ENCODE measurements at regions of chr12 and their contacts with region 1.

Region 1: GRCh38 chr12:32455607-32456071 is 56.3 kb downstream of the FGD4 start:
- DNase-seq: peak in 1 of 2 experiments; percentile 69
- H3K4me3 ChIP-seq: no peak overlapping the region
- H3K4me3 Mint-ChIP-seq: no peak overlapping the region
- H3K27ac Mint-ChIP-seq: peak overlapping the region; percentile 74
- H3K4me1 ChIP-seq: peaks cover 48% of the 10 kb centered on the region
- H3K4me1 Mint-ChIP-seq: peaks cover 54% of the 10 kb centered on the region
- H3K27me3 ChIP-seq: no peaks in the 10 kb centered on the region
- H3K27me3 Mint-ChIP-seq: no peaks in the 10 kb centered on the region
- CTCF ChIP-seq: peak; percentile 68 to 82

Region 2: DNA sequence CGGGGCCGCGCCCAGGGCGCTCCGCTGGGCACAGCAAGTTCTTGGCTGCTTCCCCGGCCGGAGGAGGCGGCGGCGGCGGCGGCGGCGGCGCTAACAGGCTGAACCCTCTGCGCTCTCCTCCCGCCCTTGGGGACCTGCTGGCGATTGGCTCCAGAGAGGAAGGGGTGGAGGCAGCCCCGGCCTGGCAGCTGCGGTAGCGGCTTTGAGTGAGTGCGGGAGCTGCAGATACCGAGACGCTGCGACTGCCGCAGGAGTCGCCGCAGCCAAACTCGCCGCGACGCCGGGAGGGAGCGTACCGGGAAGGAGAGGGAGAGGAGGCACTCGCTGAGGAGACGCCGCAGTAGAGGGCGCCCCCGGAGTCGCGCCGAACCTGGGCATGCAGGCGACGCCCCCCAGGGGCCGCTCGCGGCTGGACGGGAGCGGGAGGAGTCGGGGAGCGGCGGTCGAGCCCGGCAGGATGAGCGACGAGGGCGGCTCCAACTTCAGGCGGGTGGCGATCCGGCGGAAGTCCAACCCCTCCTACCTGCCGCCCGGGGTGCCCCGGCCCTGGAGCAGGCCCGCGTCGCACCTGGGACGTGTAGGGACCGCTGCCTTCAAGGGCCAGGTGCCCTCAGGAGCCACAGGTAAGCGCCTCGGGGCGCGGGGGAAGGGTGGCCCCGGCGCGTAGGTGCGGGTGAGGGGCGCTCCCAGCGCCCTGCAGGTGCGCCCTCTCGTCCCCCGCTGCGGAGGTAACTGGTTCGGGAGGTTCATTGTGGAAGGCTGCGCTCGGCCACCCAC is 56.1 kb before region 1 on chr12 and contains the start of gene FGD4:
- CTCF ChIA-PET with region 1: interaction called, 3 read pairs
- POLR2A ChIA-PET with region 1: no interaction called
- intact Hi-C with region 1: loop called (anchors 2 kb)
- DNase-seq: peak; percentile 96 to 97
- H3K4me3 ChIP-seq: peak within 1 kb of the TSS; percentile 93
- H3K4me3 Mint-ChIP-seq: peak within 1 kb of the TSS; percentile 86
- H3K27ac Mint-ChIP-seq: peak within 1 kb of the TSS; percentile 87
- H3K4me1 ChIP-seq: peaks cover 13% of the 10 kb centered on the region
- H3K4me1 Mint-ChIP-seq: peaks cover 14% of the 10 kb centered on the region
- H3K27me3 ChIP-seq: no peaks in the 10 kb centered on the region
- H3K27me3 Mint-ChIP-seq: no peaks in the 10 kb centered on the region
- CTCF ChIP-seq: peak; percentile 68 to 86
- total RNA-seq, gene FGD4: 31.6 and 34.3 TPM in 2 replicates

Region 3: DNA sequence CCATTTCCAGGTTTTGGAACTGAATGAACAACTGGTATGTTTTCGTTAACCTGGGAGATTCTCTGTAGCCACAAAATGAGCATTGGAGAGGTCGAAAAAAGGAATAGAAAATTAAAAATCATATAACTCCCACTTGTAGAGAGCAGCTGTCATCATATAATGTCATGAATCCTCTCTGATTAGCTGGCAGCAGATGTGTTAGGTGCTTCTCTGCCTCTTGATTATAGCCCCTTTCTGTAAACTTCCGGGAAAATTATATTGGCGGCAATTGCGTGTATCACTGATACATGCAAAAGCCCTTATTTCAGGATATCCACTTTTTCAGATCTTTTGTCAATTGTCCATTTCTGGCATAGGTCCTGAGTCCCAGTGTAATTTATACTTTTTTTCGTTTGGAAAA is 24.6 kb before region 1 on chr12:
- CTCF ChIA-PET with region 1: no interaction called
- POLR2A ChIA-PET with region 1: no interaction called
- intact Hi-C with region 1: no loop called
- DNase-seq: no peak
- H3K4me3 ChIP-seq: no peak overlapping the region
- H3K4me3 Mint-ChIP-seq: no peak overlapping the region
- H3K27ac Mint-ChIP-seq: no peak overlapping the region
- H3K4me1 ChIP-seq: peaks cover 6% of the 10 kb centered on the region
- H3K4me1 Mint-ChIP-seq: peaks cover 8% of the 10 kb centered on the region
- H3K27me3 ChIP-seq: no peaks in the 10 kb centered on the region
- H3K27me3 Mint-ChIP-seq: no peaks in the 10 kb centered on the region
- CTCF ChIP-seq: no peak

Region 4: DNA sequence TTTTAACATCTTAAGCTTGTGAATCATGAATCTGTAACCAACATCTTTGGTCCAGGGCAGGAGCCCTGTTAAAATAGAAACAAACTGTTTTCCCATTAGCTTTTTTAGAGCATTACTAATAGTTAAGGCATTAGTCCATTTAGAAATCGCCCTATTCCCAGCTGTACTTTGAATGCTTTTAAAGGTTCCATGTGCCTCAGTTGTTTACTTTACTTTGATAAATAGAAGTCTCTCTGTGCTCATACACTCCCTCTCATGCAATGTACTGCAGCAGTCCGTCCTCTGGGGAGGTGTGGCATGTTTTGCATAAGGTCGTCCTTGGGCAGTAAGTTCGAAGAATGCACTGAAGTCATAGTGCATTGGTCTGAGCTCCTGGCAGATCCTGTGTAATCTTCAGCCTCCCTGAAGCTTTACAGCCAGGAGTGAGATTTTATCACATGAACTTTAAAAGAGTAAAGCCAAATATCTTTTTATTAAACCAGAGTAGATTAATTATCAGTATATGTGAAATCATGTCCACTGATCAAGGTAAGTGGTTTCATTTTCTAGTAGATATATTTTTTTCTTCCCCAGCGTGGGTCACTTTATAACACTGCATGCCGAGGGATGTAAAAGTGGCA is 78.4 kb after region 1 on chr12:
- CTCF ChIA-PET with region 1: no interaction called
- POLR2A ChIA-PET with region 1: no interaction called
- intact Hi-C with region 1: loop called (anchors 2 kb)
- DNase-seq: peak; percentile 85 to 88
- H3K4me3 ChIP-seq: no peak overlapping the region; the same call in 1 of the 2 replicates
- H3K4me3 Mint-ChIP-seq: peak overlapping the region; percentile 62
- H3K27ac Mint-ChIP-seq: peak overlapping the region; percentile 74
- H3K4me1 ChIP-seq: peaks cover 46% of the 10 kb centered on the region
- H3K4me1 Mint-ChIP-seq: peaks cover 40% of the 10 kb centered on the region
- H3K27me3 ChIP-seq: no peaks in the 10 kb centered on the region
- H3K27me3 Mint-ChIP-seq: no peaks in the 10 kb centered on the region
- CTCF ChIP-seq: no peak

Region 5: GRCh38 chr12:32659908-32660440 is 204.3 kb after region 1 on chr12:
- CTCF ChIA-PET with region 1: interaction called, 12 read pairs
- POLR2A ChIA-PET with region 1: no interaction called
- intact Hi-C with region 1: loop called (anchors 1 kb)
- DNase-seq: peak in 1 of 2 experiments; percentile 27
- H3K4me3 ChIP-seq: no peak overlapping the region
- H3K4me3 Mint-ChIP-seq: no peak overlapping the region
- H3K27ac Mint-ChIP-seq: no peak overlapping the region
- H3K4me1 ChIP-seq: no peaks in the 10 kb centered on the region
- H3K4me1 Mint-ChIP-seq: no peaks in the 10 kb centered on the region
- H3K27me3 ChIP-seq: no peaks in the 10 kb centered on the region
- H3K27me3 Mint-ChIP-seq: no peaks in the 10 kb centered on the region
- CTCF ChIP-seq: no peak

Region 6: DNA sequence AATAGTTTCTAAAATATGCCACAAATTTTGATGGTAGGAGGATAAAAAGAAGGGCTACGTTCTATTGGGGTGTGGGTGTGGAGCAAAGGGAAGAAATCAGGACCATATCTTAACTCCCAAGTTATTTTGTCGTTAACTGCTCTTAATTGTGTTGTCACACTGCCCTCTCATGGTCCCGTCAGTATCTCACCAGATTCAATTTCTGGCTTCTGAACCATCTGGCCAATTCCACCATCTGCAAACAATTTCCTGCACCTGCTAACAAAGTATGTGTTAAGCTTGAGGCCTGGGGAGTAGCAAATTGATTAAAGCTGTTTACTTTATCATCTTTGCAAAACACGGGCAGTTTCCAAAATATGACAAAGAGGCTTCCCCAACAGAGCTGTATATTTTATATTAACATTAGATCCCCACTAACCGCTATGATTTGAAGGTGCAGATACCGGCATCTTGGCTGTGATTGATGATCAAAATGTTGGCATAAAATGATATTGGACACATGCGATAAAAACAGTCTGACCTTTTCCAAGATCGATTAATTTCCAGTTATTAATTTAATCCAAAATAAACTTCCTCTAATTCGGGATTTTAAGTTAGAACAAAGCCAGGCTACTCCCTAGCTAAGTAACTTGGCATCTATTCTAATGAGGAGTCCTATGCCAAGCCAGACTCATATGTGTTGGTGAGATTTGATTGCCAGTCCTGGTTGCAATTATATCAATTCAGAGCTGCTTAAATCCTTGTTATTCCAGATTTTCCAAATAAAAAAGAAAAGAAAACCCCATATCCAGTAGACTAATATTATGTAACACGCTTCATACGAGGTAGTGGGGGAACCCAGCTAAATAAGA is 216.5 kb after region 1 on chr12:
- CTCF ChIA-PET with region 1: no interaction called
- POLR2A ChIA-PET with region 1: no interaction called
- intact Hi-C with region 1: loop called (anchors 1 kb)
- DNase-seq: peak; percentile 57 to 74
- H3K4me3 ChIP-seq: no peak overlapping the region
- H3K4me3 Mint-ChIP-seq: no peak overlapping the region
- H3K27ac Mint-ChIP-seq: no peak overlapping the region
- H3K4me1 ChIP-seq: no peaks in the 10 kb centered on the region; the same call in 1 of the 2 replicates
- H3K4me1 Mint-ChIP-seq: no peaks in the 10 kb centered on the region
- H3K27me3 ChIP-seq: no peaks in the 10 kb centered on the region
- H3K27me3 Mint-ChIP-seq: no peaks in the 10 kb centered on the region
- CTCF ChIP-seq: peak; percentile 73 to 80

Measured in Caco-2 (cell line).